Thyroid gland (tissue), 4 donors: ENCODE measurements at regions of chr2 and their contacts with region 1.

Region 1: DNA sequence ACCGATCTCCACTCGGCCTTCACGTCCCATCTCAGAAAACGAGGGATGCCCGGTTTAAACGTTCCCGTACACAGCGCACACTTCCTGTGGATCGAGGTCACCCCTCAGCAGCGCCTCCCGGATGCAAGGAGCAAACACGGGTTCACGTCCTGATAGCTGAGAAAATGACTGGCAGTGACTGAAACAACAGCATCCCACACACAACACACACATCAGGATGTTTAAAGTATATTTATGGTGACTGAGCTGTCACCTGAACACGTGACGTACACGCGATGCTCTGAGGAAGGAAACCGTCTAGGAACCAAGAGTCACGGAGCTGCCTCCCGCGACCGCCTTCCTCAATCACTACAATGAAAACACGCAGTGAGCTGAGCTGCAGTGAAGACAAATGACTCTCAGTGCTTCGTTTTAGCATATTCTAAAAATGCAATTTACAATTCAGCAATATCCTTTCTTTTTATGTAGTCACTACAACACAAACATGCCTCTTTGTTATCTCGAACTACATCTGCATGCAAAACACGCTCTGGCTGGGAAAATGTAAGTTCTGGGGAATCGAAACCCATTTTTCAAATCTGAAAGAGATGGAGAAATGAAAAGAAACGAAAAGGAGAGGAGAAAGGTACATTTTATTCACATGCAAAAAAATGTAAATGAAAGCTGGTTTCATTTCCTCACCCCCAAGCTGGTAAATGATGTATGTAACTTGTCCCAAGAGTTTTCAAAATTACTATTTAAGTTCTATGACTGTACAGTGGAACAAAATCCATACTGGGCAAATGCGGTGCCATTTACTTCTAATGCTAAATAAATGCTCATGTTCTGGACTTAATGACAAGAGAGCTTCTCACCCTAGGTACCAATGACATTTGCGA is 19.8 kb downstream of the HDAC4 start:
- DNase-seq: peak in 1 of 2 donors; percentile 6
- H3K4me3 ChIP-seq: no peak overlapping the region
- H3K27ac ChIP-seq: no peak overlapping the region
- H3K4me1 ChIP-seq: peaks cover 3 to 12% of the 10 kb centered on the region in 2 donors
- H3K27me3 ChIP-seq: no peaks in the 10 kb centered on the region
- CTCF ChIP-seq: no peak
- POLR2A ChIP-seq: no peak

Region 2: GRCh38 chr2:239055756-239056493 is 325.1 kb before region 1 on chr2:
- intact Hi-C with region 1: no loop called
- DNase-seq: no peak
- H3K4me3 ChIP-seq: no peak overlapping the region
- H3K27ac ChIP-seq: no peak overlapping the region
- H3K4me1 ChIP-seq: no peaks in the 10 kb centered on the region
- H3K27me3 ChIP-seq: no peaks in the 10 kb centered on the region
- CTCF ChIP-seq: no peak
- POLR2A ChIP-seq: no peak

Region 3: DNA sequence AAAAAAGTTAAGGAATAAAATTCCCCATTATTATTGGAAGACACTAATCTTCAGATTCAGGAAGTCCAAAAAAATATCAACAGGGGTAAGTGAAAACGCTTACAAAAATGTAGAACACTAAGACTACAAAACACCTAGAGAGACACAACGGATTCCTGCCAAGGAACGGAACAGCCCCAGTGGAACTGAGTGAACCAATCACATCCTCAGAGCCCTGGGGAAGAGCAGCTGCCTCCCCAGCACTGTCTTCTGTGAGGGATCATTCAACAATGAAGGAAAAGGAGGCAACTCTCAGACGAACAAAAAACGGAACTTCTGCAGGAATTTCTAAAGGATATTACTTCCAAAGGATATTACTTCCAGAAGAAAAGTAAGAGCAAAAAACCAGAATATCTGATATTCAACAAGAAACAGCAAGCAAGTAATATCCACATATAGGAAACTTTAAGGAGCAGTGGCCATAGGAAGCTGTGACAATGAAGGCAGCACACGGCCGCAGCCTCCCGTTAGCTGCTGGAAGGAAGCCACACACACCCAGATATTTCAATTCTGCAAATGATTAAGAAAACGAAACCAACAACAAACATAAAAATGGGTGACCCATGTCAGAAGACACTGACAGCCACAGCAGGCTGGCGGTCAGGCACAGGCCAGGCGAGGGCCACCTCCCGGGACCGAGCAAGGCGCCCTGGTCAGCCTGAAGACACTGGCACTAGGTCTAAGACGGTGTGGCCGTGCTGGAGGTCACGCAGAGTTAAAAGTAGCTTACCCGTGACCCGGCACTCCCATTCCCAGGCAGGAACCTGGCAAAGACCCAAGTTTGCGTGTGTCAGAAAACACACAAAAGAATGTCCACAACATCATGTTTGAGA is 62.0 kb before region 1 on chr2:
- intact Hi-C with region 1: loop called (anchors 10 kb)
- DNase-seq: peak; percentile 40 to 60
- H3K4me3 ChIP-seq: peak overlapping the region in 1 of 3 donors; percentile 6
- H3K27ac ChIP-seq: peak overlapping the region in 2 of 3 donors; percentile 51 to 54
- H3K4me1 ChIP-seq: peaks cover 8 to 29% of the 10 kb centered on the region in 2 donors
- H3K27me3 ChIP-seq: no peaks in the 10 kb centered on the region
- CTCF ChIP-seq: no peak
- POLR2A ChIP-seq: no peak

Region 4: DNA sequence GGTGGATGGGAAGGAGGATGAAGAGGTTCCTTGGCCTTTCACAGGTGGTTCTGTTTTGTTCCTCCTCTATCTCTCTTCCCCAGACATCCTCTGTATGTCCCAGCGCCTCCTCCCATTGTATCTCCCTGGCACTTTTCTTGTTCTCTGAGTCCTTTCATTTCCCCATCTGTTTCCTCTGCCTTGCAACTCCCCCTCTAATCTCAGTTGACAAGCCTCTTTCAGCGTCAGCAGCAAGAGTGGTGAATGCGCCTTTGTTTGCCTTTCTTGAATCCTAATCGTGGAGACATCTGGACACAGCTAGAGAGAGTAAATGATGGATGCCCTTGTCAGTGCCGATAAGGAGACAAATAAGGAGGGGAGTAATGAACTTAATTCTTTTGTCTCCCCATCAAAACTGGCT is 477.1 kb after region 1 on chr2:
- intact Hi-C with region 1: no loop called
- DNase-seq: no peak
- H3K4me3 ChIP-seq: no peak overlapping the region
- H3K27ac ChIP-seq: no peak overlapping the region
- H3K4me1 ChIP-seq: no peaks in the 10 kb centered on the region
- H3K27me3 ChIP-seq: no peaks in the 10 kb centered on the region
- CTCF ChIP-seq: no peak
- POLR2A ChIP-seq: no peak